CD8-positive, alpha-beta T cell (primary cell): ENCODE measurements at regions of chr10 and their contacts with region 1.

Region 1: DNA sequence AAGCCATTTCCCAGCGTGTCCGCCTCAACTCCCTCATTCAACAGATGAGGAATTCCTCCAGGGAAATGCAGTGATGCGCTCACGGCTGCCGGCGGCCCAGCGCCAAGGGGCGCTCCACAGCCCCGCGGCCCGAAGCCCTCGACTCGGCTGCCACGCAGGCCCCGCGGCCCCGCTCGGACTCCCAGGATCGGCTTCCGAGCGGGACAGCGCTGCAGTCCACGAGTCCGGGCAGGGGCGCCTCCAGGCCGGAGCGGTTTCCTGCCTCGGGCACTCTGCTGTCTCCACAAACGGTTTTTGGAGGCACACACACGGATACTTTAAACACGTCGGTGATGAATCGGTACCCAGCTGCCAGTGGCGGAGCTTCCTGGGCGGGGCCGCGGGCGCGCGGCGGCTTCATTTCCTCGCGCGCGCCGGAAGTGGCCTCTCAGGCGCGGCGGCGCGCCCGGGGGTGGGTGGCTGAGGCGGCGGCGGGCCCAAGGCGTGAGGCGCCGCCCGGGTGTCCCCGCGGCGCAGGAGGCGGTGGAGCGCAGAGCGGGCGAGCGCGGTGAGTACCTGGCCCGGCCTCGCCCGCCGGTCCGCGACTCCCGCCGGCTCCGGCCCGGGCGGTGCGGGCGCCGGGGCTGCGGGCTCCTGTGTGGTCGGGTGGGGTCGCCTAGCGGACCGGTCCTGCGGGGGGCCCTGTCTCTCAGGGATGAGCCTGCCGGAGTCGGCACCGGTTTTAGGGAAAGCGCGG is at the start of gene CSGALNACT2:
- DNase-seq: peak; percentile 78 to 95 (median 88)
- ATAC-seq: peak; percentile 65
- H3K4me3 ChIP-seq: peak within 1 kb of the TSS; percentile 70 to 87
- H3K4me3 Mint-ChIP-seq: peak within 1 kb of the TSS; percentile 98
- H3K27ac ChIP-seq: peak within 1 kb of the TSS; percentile 89 to 91
- H3K27ac Mint-ChIP-seq: peak within 1 kb of the TSS; percentile 99
- H3K4me1 ChIP-seq: peaks cover 36% of the 10 kb centered on the region
- H3K4me1 Mint-ChIP-seq: peaks cover 49% of the 10 kb centered on the region
- H3K27me3 ChIP-seq: no peaks in the 10 kb centered on the region
- H3K27me3 Mint-ChIP-seq: no peaks in the 10 kb centered on the region
- CTCF ChIP-seq: no peak
- total RNA-seq, gene CSGALNACT2: 66.7 to 66.9 TPM

Region 2: GRCh38 chr10:42782446-42783180 is 355.6 kb before region 1 on chr10 and contains the start of gene BMS1:
- CTCF ChIA-PET with region 1: no interaction called
- POLR2A ChIA-PET with region 1: interaction called, 4 read pairs
- intact Hi-C with region 1: loop called in 1 of 2 experiments (anchors 5 kb)
- DNase-seq: peak; percentile 82 to 92 (median 87)
- ATAC-seq: peak; percentile 85
- H3K4me3 ChIP-seq: peak within 1 kb of the TSS; percentile 83 to 88
- H3K4me3 Mint-ChIP-seq: peak within 1 kb of the TSS; percentile 99
- H3K27ac ChIP-seq: peak within 1 kb of the TSS; percentile 78 to 90
- H3K27ac Mint-ChIP-seq: peak within 1 kb of the TSS; percentile 96
- H3K4me1 ChIP-seq: peaks cover 23% of the 10 kb centered on the region
- H3K4me1 Mint-ChIP-seq: peaks cover 42% of the 10 kb centered on the region
- H3K27me3 ChIP-seq: no peaks in the 10 kb centered on the region
- H3K27me3 Mint-ChIP-seq: peaks cover 4% of the 10 kb centered on the region
- CTCF ChIP-seq: no peak
- total RNA-seq, gene BMS1: 18.1 to 19.9 TPM

Region 3: DNA sequence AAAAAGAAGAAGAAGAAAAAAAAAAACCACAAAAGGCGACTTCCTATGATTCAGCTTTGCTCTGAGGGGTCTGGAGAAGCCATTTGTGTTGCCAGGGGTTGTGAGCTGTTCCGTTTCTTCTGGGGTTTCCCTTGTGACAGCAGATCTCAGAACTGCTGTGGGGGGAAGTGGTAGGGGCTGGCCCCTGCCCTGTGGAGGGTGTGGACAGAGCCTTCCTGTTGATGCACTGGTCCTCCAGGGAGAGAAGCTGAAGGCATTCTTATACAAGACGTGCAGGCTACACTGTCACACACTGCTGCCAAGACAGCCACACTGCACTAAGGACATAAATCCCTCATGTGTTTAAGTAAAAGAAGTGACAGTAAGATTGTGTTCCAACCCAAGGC is 17.3 kb before region 1 on chr10:
- CTCF ChIA-PET with region 1: no interaction called
- POLR2A ChIA-PET with region 1: interaction called, 24 read pairs
- intact Hi-C with region 1: no loop called
- DNase-seq: peak in 8 of 9 experiments; percentile 35 to 81 (median 54)
- ATAC-seq: peak; percentile 93
- H3K4me3 ChIP-seq: no peak overlapping the region
- H3K4me3 Mint-ChIP-seq: peak overlapping the region; percentile 60
- H3K27ac ChIP-seq: peak overlapping the region; percentile 10 to 66
- H3K27ac Mint-ChIP-seq: peak overlapping the region; percentile 83
- H3K4me1 ChIP-seq: peaks cover 24% of the 10 kb centered on the region
- H3K4me1 Mint-ChIP-seq: peaks cover 21% of the 10 kb centered on the region
- H3K27me3 ChIP-seq: no peaks in the 10 kb centered on the region
- H3K27me3 Mint-ChIP-seq: no peaks in the 10 kb centered on the region
- CTCF ChIP-seq: no peak

Region 4: GRCh38 chr10:43304687-43305340 is 166.6 kb after region 1 on chr10:
- CTCF ChIA-PET with region 1: no interaction called
- POLR2A ChIA-PET with region 1: no interaction called
- intact Hi-C with region 1: loop called in 1 of 2 experiments (anchors 5 kb)
- DNase-seq: peak in 8 of 9 experiments; percentile 33 to 72 (median 61)
- ATAC-seq: peak; percentile 69
- H3K4me3 ChIP-seq: peak overlapping the region; percentile 40
- H3K4me3 Mint-ChIP-seq: peak overlapping the region; percentile 79
- H3K27ac ChIP-seq: no peak overlapping the region
- H3K27ac Mint-ChIP-seq: no peak overlapping the region
- H3K4me1 ChIP-seq: peaks cover 32% of the 10 kb centered on the region
- H3K4me1 Mint-ChIP-seq: peaks cover 51% of the 10 kb centered on the region
- H3K27me3 ChIP-seq: no peaks in the 10 kb centered on the region
- H3K27me3 Mint-ChIP-seq: no peaks in the 10 kb centered on the region
- CTCF ChIP-seq: no peak

Region 5: GRCh38 chr10:43396928-43397624 is 258.9 kb after region 1 on chr10:
- CTCF ChIA-PET with region 1: no interaction called
- POLR2A ChIA-PET with region 1: no interaction called
- intact Hi-C with region 1: loop called in 1 of 2 experiments (anchors 2 kb)
- DNase-seq: peak; percentile 44 to 89 (median 73)
- ATAC-seq: peak; percentile 51
- H3K4me3 ChIP-seq: peak overlapping the region; percentile 64 to 71
- H3K4me3 Mint-ChIP-seq: peak overlapping the region; percentile 94
- H3K27ac ChIP-seq: peak overlapping the region; percentile 66 to 89
- H3K27ac Mint-ChIP-seq: peak overlapping the region; percentile 93
- H3K4me1 ChIP-seq: peaks cover 71% of the 10 kb centered on the region
- H3K4me1 Mint-ChIP-seq: peaks cover 80% of the 10 kb centered on the region
- H3K27me3 ChIP-seq: no peaks in the 10 kb centered on the region
- H3K27me3 Mint-ChIP-seq: no peaks in the 10 kb centered on the region
- CTCF ChIP-seq: no peak

Region 6: GRCh38 chr10:43574001-43574892 is 436.1 kb after region 1 on chr10 and contains the start of gene ZNF239:
- CTCF ChIA-PET with region 1: no interaction called
- POLR2A ChIA-PET with region 1: interaction called, 4 read pairs
- intact Hi-C with region 1: loop called in 1 of 2 experiments (anchors 2 kb)
- DNase-seq: peak; percentile 62 to 93 (median 82)
- ATAC-seq: peak; percentile 88
- H3K4me3 ChIP-seq: peak within 1 kb of the TSS; percentile 43 to 63
- H3K4me3 Mint-ChIP-seq: peak within 1 kb of the TSS; percentile 85
- H3K27ac ChIP-seq: peak within 1 kb of the TSS; percentile 38 to 66
- H3K27ac Mint-ChIP-seq: peak within 1 kb of the TSS; percentile 90
- H3K4me1 ChIP-seq: peaks cover 25% of the 10 kb centered on the region
- H3K4me1 Mint-ChIP-seq: peaks cover 51% of the 10 kb centered on the region
- H3K27me3 ChIP-seq: no peaks in the 10 kb centered on the region
- H3K27me3 Mint-ChIP-seq: no peaks in the 10 kb centered on the region
- CTCF ChIP-seq: no peak
- total RNA-seq, gene ZNF239: 0.75 to 1.1 TPM

Region 7: GRCh38 chr10:44083719-44084400 is 945.7 kb after region 1 on chr10:
- CTCF ChIA-PET with region 1: no interaction called
- POLR2A ChIA-PET with region 1: no interaction called
- intact Hi-C with region 1: no loop called
- DNase-seq: no peak
- ATAC-seq: no peak
- H3K4me3 ChIP-seq: no peak overlapping the region
- H3K4me3 Mint-ChIP-seq: no peak overlapping the region
- H3K27ac ChIP-seq: no peak overlapping the region
- H3K27ac Mint-ChIP-seq: no peak overlapping the region
- H3K4me1 ChIP-seq: no peaks in the 10 kb centered on the region
- H3K4me1 Mint-ChIP-seq: no peaks in the 10 kb centered on the region
- H3K27me3 ChIP-seq: no peaks in the 10 kb centered on the region
- H3K27me3 Mint-ChIP-seq: peaks cover 19% of the 10 kb centered on the region
- CTCF ChIP-seq: no peak